B cell (primary cell): ENCODE measurements at regions of chr3 and their contacts with region 1.

Region 1: DNA sequence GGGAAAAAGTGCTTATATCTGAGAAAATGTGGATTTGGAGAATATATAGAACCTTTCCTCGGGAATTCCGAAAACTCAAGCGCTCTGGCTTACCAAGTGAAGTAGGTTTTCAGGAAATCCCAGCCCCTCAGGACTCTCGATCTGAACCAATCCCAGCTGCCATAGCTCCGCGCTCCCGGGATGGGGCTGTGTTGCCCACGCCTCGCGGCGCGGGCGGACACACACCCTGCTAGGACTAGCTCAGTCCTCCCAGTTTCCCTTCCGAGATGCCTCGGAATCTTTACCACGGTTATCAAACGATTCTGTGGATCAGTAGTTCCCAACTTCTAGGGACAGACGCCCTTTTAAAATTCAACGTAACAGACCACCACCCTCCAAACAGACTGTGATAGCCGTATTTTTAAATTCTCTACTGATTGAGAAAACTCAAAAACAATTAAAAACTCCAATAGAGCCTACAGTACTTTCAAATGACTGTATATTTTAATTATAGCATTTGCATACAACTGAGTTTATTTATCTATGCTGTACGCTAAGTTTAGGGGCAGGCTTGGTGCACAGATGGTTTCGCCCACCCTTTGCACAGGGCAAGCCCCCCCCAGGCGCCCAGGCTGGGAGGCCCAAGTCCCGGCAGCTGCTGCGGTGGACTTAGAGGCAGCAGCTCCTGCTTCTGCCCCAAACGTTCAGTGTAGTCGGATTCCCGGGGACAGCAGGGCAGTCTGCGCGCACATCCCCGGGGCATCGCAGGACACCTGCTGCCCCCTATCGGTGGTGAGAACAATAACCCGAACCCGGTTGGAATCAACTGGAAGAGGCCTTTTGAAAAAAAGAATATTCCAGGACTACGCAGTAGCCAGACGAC is 52.3 kb downstream of the CCDC54 start:
- DNase-seq: peak; percentile 82
- ATAC-seq: peak; percentile 52
- H3K4me3 ChIP-seq: peak overlapping the region; percentile 44 to 80 (median 70)
- H3K4me3 Mint-ChIP-seq: peak overlapping the region; percentile 97
- H3K27ac ChIP-seq: no peak overlapping the region
- H3K27ac Mint-ChIP-seq: peak overlapping the region; percentile 85
- H3K4me1 ChIP-seq: peaks cover 49% of the 10 kb centered on the region in 2 donors
- H3K4me1 Mint-ChIP-seq: peaks cover 59% of the 10 kb centered on the region
- H3K27me3 ChIP-seq: no peaks in the 10 kb centered on the region
- H3K27me3 Mint-ChIP-seq: no peaks in the 10 kb centered on the region
- CTCF ChIP-seq: peak; percentile 90

Region 2: DNA sequence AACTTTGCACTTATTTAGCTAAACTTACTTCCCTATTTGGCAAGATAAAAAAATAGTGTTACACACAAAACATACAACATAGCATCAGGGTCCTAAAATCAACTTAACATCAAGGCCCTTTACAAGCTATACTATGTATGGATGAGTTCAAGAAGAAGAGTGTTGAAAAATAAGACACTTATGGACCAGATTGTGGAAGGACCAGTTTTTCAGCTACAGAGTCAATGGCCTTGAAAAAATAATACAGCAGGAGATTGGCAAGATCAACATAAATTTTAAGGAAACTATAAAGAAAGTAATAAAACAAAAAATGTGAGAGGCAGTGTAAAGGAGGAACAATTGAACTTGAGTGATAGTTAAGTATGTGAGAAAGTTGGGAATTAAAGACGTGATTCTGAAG is 26.9 kb after region 1 on chr3:
- CTCF ChIA-PET with region 1: interaction called, 15 read pairs
- POLR2A ChIA-PET with region 1: interaction called, 3 read pairs
- intact Hi-C with region 1: no loop called
- DNase-seq: no peak
- ATAC-seq: no peak
- H3K4me3 ChIP-seq: no peak overlapping the region
- H3K4me3 Mint-ChIP-seq: no peak overlapping the region
- H3K27ac ChIP-seq: no peak overlapping the region
- H3K27ac Mint-ChIP-seq: no peak overlapping the region
- H3K4me1 ChIP-seq: no peaks in the 10 kb centered on the region
- H3K4me1 Mint-ChIP-seq: no peaks in the 10 kb centered on the region
- H3K27me3 ChIP-seq: no peaks in the 10 kb centered on the region
- H3K27me3 Mint-ChIP-seq: no peaks in the 10 kb centered on the region
- CTCF ChIP-seq: no peak

Region 3: GRCh38 chr3:107522510-107523288 is 93.1 kb after region 1 on chr3 and contains the start of gene BBX:
- CTCF ChIA-PET with region 1: interaction called, 7 read pairs
- POLR2A ChIA-PET with region 1: interaction called, 27 read pairs
- intact Hi-C with region 1: loop called (anchors 1 kb)
- DNase-seq: peak; percentile 97
- ATAC-seq: peak; percentile 84
- H3K4me3 ChIP-seq: peak within 1 kb of the TSS; percentile 74 to 96 (median 92)
- H3K4me3 Mint-ChIP-seq: peak within 1 kb of the TSS; percentile 98
- H3K27ac ChIP-seq: peak within 1 kb of the TSS; percentile 81 to 92
- H3K27ac Mint-ChIP-seq: peak within 1 kb of the TSS; percentile 99
- H3K4me1 ChIP-seq: peaks cover 24 to 27% of the 10 kb centered on the region in 2 donors
- H3K4me1 Mint-ChIP-seq: peaks cover 34% of the 10 kb centered on the region
- H3K27me3 ChIP-seq: no peaks in the 10 kb centered on the region
- H3K27me3 Mint-ChIP-seq: no peaks in the 10 kb centered on the region
- CTCF ChIP-seq: no peak
- total RNA-seq, gene BBX: 131 and 133 TPM in 2 replicates

Region 4: DNA sequence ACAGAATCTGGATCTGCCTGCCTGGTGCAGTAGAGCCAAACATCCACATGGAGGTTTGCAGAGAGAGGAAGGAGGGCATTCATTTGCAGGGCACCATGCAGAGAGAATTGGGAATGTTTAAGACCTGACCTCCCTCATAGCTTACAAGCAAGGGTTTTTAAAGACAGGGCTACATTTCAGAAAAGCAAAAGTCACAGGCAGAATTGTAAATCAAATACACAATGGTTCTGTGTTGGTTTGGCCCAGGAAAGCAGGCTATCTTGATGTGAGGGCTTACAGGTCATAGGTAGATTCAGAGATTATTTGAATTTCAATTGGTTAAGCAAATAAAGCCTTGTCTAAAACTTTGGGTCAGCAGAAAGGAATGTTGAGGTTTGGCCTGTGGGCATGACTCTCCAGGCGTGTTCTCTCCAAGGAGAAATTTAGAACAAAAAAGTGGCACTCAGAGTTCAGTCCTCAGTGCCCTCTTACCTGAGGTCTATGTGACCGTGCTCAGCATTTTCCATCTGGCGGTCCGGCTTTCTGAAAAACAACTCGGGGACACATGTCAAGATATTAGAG is 569.7 kb after region 1 on chr3:
- CTCF ChIA-PET with region 1: no interaction called
- POLR2A ChIA-PET with region 1: no interaction called
- intact Hi-C with region 1: no loop called
- DNase-seq: no peak
- ATAC-seq: no peak
- H3K4me3 ChIP-seq: no peak overlapping the region
- H3K4me3 Mint-ChIP-seq: no peak overlapping the region
- H3K27ac ChIP-seq: no peak overlapping the region
- H3K27ac Mint-ChIP-seq: no peak overlapping the region
- H3K4me1 ChIP-seq: peaks cover 3 to 4% of the 10 kb centered on the region in 2 donors
- H3K4me1 Mint-ChIP-seq: no peaks in the 10 kb centered on the region
- H3K27me3 ChIP-seq: peaks cover 0 to 3% (median 0%) of the 10 kb centered on the region in 4 experiments
- H3K27me3 Mint-ChIP-seq: peaks cover 7% of the 10 kb centered on the region
- CTCF ChIP-seq: no peak